CD8-positive, alpha-beta T cell (primary cell): ENCODE measurements at regions of chr5 and their contacts with region 1.

Region 1: DNA sequence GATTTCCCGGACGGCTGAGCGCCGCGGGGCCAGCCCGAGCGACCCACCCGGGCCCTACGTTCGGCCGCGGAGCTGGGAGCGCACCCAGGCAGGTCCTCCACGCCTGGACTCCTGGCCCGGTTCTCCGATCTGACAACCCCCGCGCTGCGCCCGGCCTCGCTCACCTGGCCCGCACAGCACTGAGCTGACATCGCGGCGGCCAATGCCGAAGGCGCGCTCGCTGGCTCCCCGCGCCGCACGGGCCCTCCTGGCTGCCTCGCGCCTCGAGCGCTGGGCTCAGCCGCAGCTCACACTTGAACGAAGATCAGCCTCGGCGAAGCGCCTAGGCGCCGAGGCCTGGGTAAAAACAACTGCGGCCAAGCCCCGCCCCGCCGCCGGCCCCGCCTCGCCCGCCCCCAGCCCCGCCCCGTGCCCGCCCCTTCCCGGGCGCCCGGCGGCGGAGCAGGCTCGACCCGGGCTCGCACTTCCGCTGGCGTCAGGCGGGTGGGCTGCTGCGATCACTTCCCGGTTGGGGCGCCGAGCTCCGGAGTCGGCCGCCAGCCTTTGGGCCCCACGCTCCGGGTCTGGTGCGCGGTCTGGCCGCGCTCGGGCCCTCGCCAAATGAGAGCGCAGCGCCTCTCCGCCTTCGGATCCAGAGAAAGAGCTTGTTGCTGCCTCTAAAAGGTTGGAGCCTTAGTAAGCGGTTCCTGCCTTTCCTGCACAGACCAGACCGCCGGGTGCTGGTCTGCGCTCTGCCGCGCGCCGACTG is at the start of gene SERINC5:
- DNase-seq: peak; percentile 69 to 92 (median 83)
- ATAC-seq: peak; percentile 74
- H3K4me3 ChIP-seq: peak within 1 kb of the TSS; percentile 83 to 91
- H3K4me3 Mint-ChIP-seq: peak within 1 kb of the TSS; percentile 99
- H3K27ac ChIP-seq: peak within 1 kb of the TSS; percentile 89 to 94
- H3K27ac Mint-ChIP-seq: peak within 1 kb of the TSS; percentile 99
- H3K4me1 ChIP-seq: peaks cover 36% of the 10 kb centered on the region
- H3K4me1 Mint-ChIP-seq: peaks cover 57% of the 10 kb centered on the region
- H3K27me3 ChIP-seq: no peaks in the 10 kb centered on the region
- H3K27me3 Mint-ChIP-seq: no peaks in the 10 kb centered on the region
- CTCF ChIP-seq: no peak
- total RNA-seq, gene SERINC5: 112 to 117 TPM

Region 2: DNA sequence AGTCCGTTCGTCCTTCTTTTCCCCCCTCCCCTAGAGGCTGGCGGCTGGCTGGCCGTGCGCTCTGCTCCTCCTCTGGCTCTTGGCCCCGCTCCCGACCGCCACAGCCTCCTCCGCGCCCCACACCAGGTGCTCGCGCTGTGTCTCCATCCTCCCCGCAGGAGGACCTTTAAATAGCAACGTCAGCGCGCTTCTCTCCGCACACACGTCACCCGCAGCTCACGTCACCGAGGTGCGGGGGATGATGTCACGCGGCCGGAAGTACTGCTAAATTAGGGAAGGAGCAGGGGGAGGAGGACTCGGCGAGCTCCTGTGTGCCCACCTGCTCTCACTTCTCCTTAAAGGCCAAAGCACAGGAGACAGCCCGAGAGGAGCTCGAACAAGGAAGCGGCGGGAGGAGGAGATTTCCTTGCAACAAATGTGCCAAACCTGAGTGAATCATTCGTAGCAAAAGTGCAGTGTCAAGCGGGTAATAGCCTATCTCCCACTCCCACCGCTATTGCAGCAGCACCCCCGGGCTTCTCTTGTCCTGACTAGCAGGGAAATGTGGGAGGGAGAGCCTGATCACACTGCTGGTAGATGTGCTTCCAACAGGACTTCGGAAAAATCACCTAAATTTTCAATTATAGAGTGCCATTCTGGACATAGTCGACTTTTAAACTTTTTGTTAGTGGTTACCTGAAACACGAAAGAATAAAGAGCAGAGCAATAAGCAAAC is 741.4 kb before region 1 on chr5:
- CTCF ChIA-PET with region 1: no interaction called
- POLR2A ChIA-PET with region 1: no interaction called
- intact Hi-C with region 1: loop called in 1 of 2 experiments (anchors 10 kb)
- DNase-seq: peak; percentile 80 to 98 (median 92)
- ATAC-seq: peak; percentile 84
- H3K4me3 ChIP-seq: peak overlapping the region; percentile 62 to 73
- H3K4me3 Mint-ChIP-seq: peak overlapping the region; percentile 99
- H3K27ac ChIP-seq: peak overlapping the region; percentile 91 to 97
- H3K27ac Mint-ChIP-seq: peak overlapping the region; percentile 99
- H3K4me1 ChIP-seq: peaks cover 19% of the 10 kb centered on the region
- H3K4me1 Mint-ChIP-seq: peaks cover 42% of the 10 kb centered on the region
- H3K27me3 ChIP-seq: peaks cover 6 to 7% of the 10 kb centered on the region in 2 experiments
- H3K27me3 Mint-ChIP-seq: peaks cover 5% of the 10 kb centered on the region
- CTCF ChIP-seq: peak; percentile 13

Region 3: GRCh38 chr5:80117446-80117845 is 138.5 kb before region 1 on chr5:
- CTCF ChIA-PET with region 1: interaction called, 4 read pairs
- POLR2A ChIA-PET with region 1: interaction called, 21 read pairs
- intact Hi-C with region 1: no loop called
- DNase-seq: peak in 1 of 9 experiments; percentile 26
- ATAC-seq: no peak
- H3K4me3 ChIP-seq: no peak overlapping the region
- H3K4me3 Mint-ChIP-seq: no peak overlapping the region
- H3K27ac ChIP-seq: no peak overlapping the region
- H3K27ac Mint-ChIP-seq: peak overlapping the region; percentile 89
- H3K4me1 ChIP-seq: peaks cover 36% of the 10 kb centered on the region
- H3K4me1 Mint-ChIP-seq: peaks cover 56% of the 10 kb centered on the region
- H3K27me3 ChIP-seq: no peaks in the 10 kb centered on the region
- H3K27me3 Mint-ChIP-seq: no peaks in the 10 kb centered on the region
- CTCF ChIP-seq: no peak

Region 4: DNA sequence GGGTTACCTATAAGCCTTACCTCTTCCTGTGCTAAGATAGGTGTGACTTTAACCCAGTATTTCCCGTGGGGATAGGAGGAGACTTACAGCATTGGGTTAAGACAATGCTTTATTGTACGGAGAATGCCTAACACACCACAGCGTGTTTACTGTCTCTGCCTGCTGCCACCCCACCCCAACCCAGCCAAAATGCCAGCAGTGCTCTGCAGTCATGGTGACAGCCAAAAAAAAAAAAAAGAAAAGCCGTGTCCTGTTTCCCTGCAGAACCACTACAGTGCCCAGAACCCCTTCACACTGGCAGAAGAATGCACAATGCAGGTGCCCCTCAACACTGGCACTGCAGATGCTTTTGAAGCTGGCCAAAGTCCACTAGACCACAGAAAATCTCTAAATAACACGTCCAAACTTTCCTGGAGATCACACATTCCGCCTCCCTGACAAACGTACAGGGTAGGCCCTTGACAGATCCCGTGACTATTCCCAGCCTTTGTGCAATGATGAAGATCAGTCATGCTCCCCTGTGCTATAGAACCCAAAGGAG is 102.2 kb before region 1 on chr5:
- CTCF ChIA-PET with region 1: interaction called, 3 read pairs
- POLR2A ChIA-PET with region 1: interaction called, 13 read pairs
- intact Hi-C with region 1: no loop called
- DNase-seq: peak in 6 of 9 experiments; percentile 35 to 76 (median 46)
- ATAC-seq: peak; percentile 66
- H3K4me3 ChIP-seq: no peak overlapping the region
- H3K4me3 Mint-ChIP-seq: peak overlapping the region; percentile 45
- H3K27ac ChIP-seq: peak overlapping the region; percentile 25 to 64
- H3K27ac Mint-ChIP-seq: peak overlapping the region; percentile 92
- H3K4me1 ChIP-seq: peaks cover 55% of the 10 kb centered on the region
- H3K4me1 Mint-ChIP-seq: peaks cover 65% of the 10 kb centered on the region
- H3K27me3 ChIP-seq: no peaks in the 10 kb centered on the region
- H3K27me3 Mint-ChIP-seq: no peaks in the 10 kb centered on the region
- CTCF ChIP-seq: no peak

Region 5: GRCh38 chr5:80191991-80192398 is 63.9 kb before region 1 on chr5:
- CTCF ChIA-PET with region 1: interaction called, 5 read pairs
- POLR2A ChIA-PET with region 1: interaction called, 59 read pairs
- intact Hi-C with region 1: loop called (anchors 2 to 10 kb)
- DNase-seq: peak in 7 of 9 experiments; percentile 43 to 74 (median 64)
- ATAC-seq: peak; percentile 67
- H3K4me3 ChIP-seq: peak overlapping the region; percentile 17 to 34
- H3K4me3 Mint-ChIP-seq: peak overlapping the region; percentile 81
- H3K27ac ChIP-seq: peak overlapping the region; percentile 38 to 69
- H3K27ac Mint-ChIP-seq: peak overlapping the region; percentile 91
- H3K4me1 ChIP-seq: peaks cover 95% of the 10 kb centered on the region
- H3K4me1 Mint-ChIP-seq: peaks cover 84% of the 10 kb centered on the region
- H3K27me3 ChIP-seq: no peaks in the 10 kb centered on the region
- H3K27me3 Mint-ChIP-seq: no peaks in the 10 kb centered on the region
- CTCF ChIP-seq: no peak

Region 6: GRCh38 chr5:80216753-80217596 is 38.9 kb before region 1 on chr5:
- CTCF ChIA-PET with region 1: interaction called, 4 read pairs
- POLR2A ChIA-PET with region 1: interaction called, 6 read pairs
- intact Hi-C with region 1: loop called (anchors 5 kb)
- DNase-seq: peak in 3 of 9 experiments; percentile 28 to 45 (median 32)
- ATAC-seq: peak; percentile 27
- H3K4me3 ChIP-seq: peak overlapping the region in 1 of 2 experiments; percentile 31
- H3K4me3 Mint-ChIP-seq: peak overlapping the region; percentile 70
- H3K27ac ChIP-seq: peak overlapping the region; percentile 39 to 55
- H3K27ac Mint-ChIP-seq: peak overlapping the region; percentile 93
- H3K4me1 ChIP-seq: peaks cover 93% of the 10 kb centered on the region
- H3K4me1 Mint-ChIP-seq: peaks cover 92% of the 10 kb centered on the region
- H3K27me3 ChIP-seq: no peaks in the 10 kb centered on the region
- H3K27me3 Mint-ChIP-seq: no peaks in the 10 kb centered on the region
- CTCF ChIP-seq: no peak

Region 7: GRCh38 chr5:80268916-80269315 is 13.0 kb after region 1 on chr5:
- CTCF ChIA-PET with region 1: interaction called, 6 read pairs
- POLR2A ChIA-PET with region 1: interaction called, 63 read pairs
- intact Hi-C with region 1: loop called in 1 of 2 experiments (anchors 2 kb)
- DNase-seq: peak in 1 of 9 experiments; percentile 33
- ATAC-seq: peak; percentile 16
- H3K4me3 ChIP-seq: no peak overlapping the region
- H3K4me3 Mint-ChIP-seq: peak overlapping the region; percentile 69
- H3K27ac ChIP-seq: no peak overlapping the region
- H3K27ac Mint-ChIP-seq: peak overlapping the region; percentile 95
- H3K4me1 ChIP-seq: peaks cover 41% of the 10 kb centered on the region
- H3K4me1 Mint-ChIP-seq: peaks cover 50% of the 10 kb centered on the region
- H3K27me3 ChIP-seq: no peaks in the 10 kb centered on the region
- H3K27me3 Mint-ChIP-seq: no peaks in the 10 kb centered on the region
- CTCF ChIP-seq: no peak

Region 8: DNA sequence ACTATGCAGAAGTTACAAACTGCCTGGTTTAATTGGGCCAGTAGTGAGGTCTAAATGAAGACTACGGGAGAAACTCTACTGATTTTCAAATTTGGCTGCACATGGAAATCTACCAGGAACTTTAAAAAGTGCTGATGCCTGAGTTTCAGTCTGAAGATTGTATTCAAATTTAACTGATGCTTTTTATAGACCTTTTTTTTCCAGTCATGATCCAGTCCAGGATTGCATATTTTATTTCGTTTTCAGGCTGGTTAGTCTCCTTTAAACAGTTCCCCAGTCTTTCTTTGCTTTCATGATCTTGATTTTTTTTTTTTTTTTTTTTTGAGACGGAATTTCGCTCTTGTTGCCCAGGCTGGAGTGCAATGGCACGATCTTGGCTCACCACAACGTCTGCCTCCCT is 40.2 kb after region 1 on chr5:
- CTCF ChIA-PET with region 1: no interaction called
- POLR2A ChIA-PET with region 1: no interaction called
- intact Hi-C with region 1: no loop called
- DNase-seq: no peak
- ATAC-seq: no peak
- H3K4me3 ChIP-seq: no peak overlapping the region
- H3K4me3 Mint-ChIP-seq: no peak overlapping the region
- H3K27ac ChIP-seq: no peak overlapping the region
- H3K27ac Mint-ChIP-seq: no peak overlapping the region
- H3K4me1 ChIP-seq: no peaks in the 10 kb centered on the region
- H3K4me1 Mint-ChIP-seq: no peaks in the 10 kb centered on the region
- H3K27me3 ChIP-seq: no peaks in the 10 kb centered on the region
- H3K27me3 Mint-ChIP-seq: no peaks in the 10 kb centered on the region
- CTCF ChIP-seq: no peak